Testis (tissue), 5 donors: ENCODE measurements at regions of chr1 and their contacts with region 1.

Region 1: DNA sequence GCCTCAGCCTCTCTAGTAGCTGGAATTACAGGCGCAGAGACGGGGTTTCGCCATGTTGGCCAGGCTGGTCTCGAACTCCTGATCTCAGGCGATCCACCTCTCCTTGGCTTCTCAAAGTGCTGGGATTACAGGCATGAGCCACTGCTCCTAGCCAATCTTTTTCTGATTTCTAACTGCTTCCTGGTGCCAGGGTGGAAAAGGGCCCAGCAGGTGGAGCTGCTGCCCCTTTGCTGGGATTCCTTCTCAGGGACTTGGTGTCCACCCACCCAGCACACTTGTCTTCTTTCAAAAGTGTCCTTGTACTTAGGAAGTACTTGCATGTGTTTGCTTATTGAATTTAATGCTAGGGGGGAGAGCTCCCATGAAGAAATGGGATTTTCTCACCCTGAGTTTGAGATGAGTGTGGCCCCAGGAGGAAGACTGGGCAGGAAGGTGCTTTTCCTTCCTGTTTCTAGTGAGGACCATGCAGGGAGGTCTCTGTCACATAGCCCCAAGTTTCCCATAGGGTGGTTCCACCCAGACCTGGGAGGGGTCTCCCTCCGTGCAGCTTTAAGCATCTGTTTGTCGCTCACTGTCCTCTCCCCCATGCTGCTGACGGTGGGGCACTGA is 14.2 kb downstream of the UTP11 start:
- DNase-seq: peak; percentile 74
- H3K4me3 ChIP-seq: no peak overlapping the region
- H3K27ac ChIP-seq: no peak overlapping the region
- H3K4me1 ChIP-seq: peaks cover 32% of the 10 kb centered on the region
- H3K27me3 ChIP-seq: no peaks in the 10 kb centered on the region
- CTCF ChIP-seq: peak in 2 of 3 experiments; percentile 48
- POLR2A ChIP-seq: no peak

Region 2: GRCh38 chr1:39086865-39087409 is 1060.2 kb after region 1 on chr1:
- intact Hi-C with region 1: loop called (anchors 5 kb)
- DNase-seq: no peak
- H3K4me3 ChIP-seq: no peak overlapping the region
- H3K27ac ChIP-seq: peak overlapping the region; percentile 27 to 53
- H3K4me1 ChIP-seq: peaks cover 29% of the 10 kb centered on the region
- H3K27me3 ChIP-seq: no peaks in the 10 kb centered on the region
- CTCF ChIP-seq: no peak
- POLR2A ChIP-seq: no peak